HEK293T (cell line): ENCODE measurements at regions of chr13 and their contacts with region 1.

Region 1: GRCh38 chr13:36736119-36736726 is 62.4 kb downstream of the SERTM1 start:
- DNase-seq: peak; percentile 48

Region 2: GRCh38 chr13:36453516-36453915 is 282.7 kb before region 1 on chr13:
- CTCF ChIA-PET with region 1: interaction called, 17 read pairs
- POLR2A ChIA-PET with region 1: no interaction called
- DNase-seq: peak; percentile 19